Mammary epithelial cell (primary cell): ENCODE measurements at regions of chr2 and their contacts with region 1.

Region 1: DNA sequence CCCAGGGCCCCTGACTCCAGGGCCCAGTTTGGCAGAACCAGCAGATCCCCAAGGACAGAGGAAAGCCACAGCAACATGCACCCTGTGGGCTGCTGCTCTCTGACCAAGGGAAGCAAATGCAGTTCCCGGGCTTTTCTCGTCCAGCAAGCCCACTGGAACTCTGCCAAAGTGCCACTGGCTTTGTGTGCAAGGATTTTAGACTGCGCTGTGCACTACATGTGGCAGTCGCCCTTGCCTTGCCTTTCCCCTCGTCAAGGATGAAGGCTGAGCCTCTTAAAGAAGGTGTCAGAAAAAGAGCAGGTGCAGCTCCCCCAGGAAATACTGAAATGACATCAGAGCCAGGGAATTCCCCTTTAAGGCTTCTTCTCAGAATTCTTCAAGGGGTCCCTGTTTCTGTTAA is 199.2 kb downstream of the TFCP2L1 start:
- DNase-seq: no peak
- H3K4me3 ChIP-seq: no peak overlapping the region
- H3K27ac ChIP-seq: no peak overlapping the region
- H3K4me1 ChIP-seq: peaks cover 2% of the 10 kb centered on the region
- H3K27me3 ChIP-seq: no peaks in the 10 kb centered on the region
- CTCF ChIP-seq: no peak

Region 2: DNA sequence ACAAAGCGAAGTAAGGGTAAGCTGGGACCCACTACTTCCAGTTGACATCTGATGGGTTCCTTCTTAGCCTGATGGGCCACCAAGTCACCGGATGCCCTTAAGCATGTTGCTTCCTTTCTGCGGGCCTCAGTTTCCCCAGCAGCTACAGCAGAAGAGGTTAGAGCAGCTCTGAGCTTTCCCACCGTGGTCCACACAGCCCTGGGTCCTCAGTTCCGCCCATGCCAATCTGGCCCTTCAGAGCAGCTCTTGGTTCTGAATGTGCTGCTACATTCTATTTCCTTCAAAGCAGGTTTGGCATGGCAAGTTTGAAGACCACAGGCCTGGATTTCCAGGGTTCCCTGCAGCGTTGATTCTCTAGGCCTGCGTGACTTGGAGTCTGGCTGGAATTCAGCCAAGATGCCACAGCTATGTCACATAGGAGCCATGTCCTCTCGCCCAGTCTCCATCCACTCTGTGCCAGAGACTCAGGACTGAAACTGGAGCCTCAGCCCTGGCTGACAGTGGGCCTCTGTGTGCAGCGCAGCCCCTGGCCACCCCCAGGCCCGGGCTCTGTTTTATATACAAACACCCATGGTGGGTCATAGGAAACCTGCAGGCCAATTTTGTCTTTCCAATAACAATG is 119.6 kb after region 1 on chr2:
- CTCF ChIA-PET with region 1: no interaction called
- dilution Hi-C with region 1: no loop called
- in situ Hi-C with region 1: no loop called
- intact Hi-C with region 1: no loop called
- DNase-seq: no peak
- H3K4me3 ChIP-seq: no peak overlapping the region
- H3K27ac ChIP-seq: no peak overlapping the region
- H3K4me1 ChIP-seq: peaks cover 7% of the 10 kb centered on the region
- H3K27me3 ChIP-seq: no peaks in the 10 kb centered on the region
- CTCF ChIP-seq: no peak

Region 3: DNA sequence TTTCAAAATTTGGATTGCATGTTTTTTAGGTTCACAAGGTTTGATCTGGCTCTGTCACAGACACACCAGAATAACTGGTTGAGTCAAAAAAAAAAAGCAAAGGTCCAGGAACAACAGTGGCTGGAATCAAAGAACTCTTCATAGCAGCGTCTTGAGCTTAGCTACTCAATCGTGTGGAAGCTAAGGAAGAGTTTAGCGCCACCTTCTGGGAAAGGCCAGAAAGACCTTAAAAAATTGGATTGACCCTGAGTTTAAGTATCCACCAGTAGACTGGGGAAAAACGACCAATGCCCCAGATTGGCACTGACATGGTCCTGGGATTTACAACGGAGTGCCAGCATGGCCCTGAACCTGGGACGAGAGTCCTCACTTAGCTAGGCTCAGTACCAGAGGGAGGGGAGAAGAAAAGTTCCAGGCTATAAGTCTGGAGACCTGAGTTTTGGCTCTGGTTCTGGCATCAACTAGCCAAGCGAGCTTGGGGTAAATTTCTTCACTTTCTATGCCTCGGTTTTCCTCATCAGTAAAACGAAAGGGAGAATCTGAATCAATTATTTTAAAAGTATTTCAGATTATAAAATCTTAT is 270.3 kb after region 1 on chr2:
- CTCF ChIA-PET with region 1: interaction called, 3 read pairs
- dilution Hi-C with region 1: loop called (anchors 5 kb)
- in situ Hi-C with region 1: loop called in 1 of 2 experiments (anchors 10 kb)
- intact Hi-C with region 1: loop called (anchors 1 kb)
- DNase-seq: peak; percentile 57
- H3K4me3 ChIP-seq: no peak overlapping the region
- H3K27ac ChIP-seq: no peak overlapping the region
- H3K4me1 ChIP-seq: peaks cover 15% of the 10 kb centered on the region
- H3K27me3 ChIP-seq: no peaks in the 10 kb centered on the region
- CTCF ChIP-seq: peak; percentile 82 to 83